CD4-positive, alpha-beta T cell (primary cell): ENCODE measurements at regions of chr15 and their contacts with region 1.

Region 1: GRCh38 chr15:24748812-24749439 is 73.4 kb downstream of the NPAP1 start:
- DNase-seq: no peak
- ATAC-seq: no peak
- H3K4me3 ChIP-seq: no peak overlapping the region
- H3K4me3 Mint-ChIP-seq: no peak overlapping the region
- H3K27ac ChIP-seq: no peak overlapping the region
- H3K27ac Mint-ChIP-seq: no peak overlapping the region
- H3K4me1 ChIP-seq: no peaks in the 10 kb centered on the region
- H3K4me1 Mint-ChIP-seq: no peaks in the 10 kb centered on the region
- H3K27me3 ChIP-seq: no peaks in the 10 kb centered on the region
- H3K27me3 Mint-ChIP-seq: no peaks in the 10 kb centered on the region
- CTCF ChIP-seq: no peak

Region 2: DNA sequence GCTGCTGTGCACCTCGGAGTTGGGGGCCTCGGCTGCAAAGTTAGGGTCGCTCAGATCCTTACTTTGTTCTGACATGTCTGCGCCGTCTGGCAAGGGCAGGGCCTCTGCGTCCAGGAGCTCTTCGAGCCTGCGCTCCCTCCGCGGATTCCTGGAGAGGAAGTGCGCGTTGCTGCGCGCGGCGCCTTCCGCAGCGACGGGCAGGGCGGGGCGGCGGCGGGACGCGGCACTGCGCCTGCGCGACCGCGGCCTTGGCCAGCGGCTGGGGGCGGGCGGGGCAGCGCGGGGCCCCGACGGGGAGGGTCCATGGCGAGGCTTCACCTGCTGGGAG is 1061.8 kb before region 1 on chr15 and contains the start of gene NDN:
- CTCF ChIA-PET with region 1: no interaction called
- POLR2A ChIA-PET with region 1: no interaction called
- intact Hi-C with region 1: no loop called
- DNase-seq: peak in 1 of 14 experiments; percentile 2
- ATAC-seq: no peak
- H3K4me3 ChIP-seq: no peak within 1 kb of the TSS
- H3K4me3 Mint-ChIP-seq: no peak within 1 kb of the TSS
- H3K27ac ChIP-seq: no peak within 1 kb of the TSS
- H3K27ac Mint-ChIP-seq: no peak within 1 kb of the TSS
- H3K4me1 ChIP-seq: no peaks in the 10 kb centered on the region
- H3K4me1 Mint-ChIP-seq: no peaks in the 10 kb centered on the region
- H3K27me3 ChIP-seq: no peaks in the 10 kb centered on the region
- H3K27me3 Mint-ChIP-seq: peaks cover 3% of the 10 kb centered on the region
- CTCF ChIP-seq: no peak
- total RNA-seq, gene NDN: not detected

Region 3: GRCh38 chr15:25244731-25245585 is 496.0 kb after region 1 on chr15:
- CTCF ChIA-PET with region 1: no interaction called
- POLR2A ChIA-PET with region 1: no interaction called
- intact Hi-C with region 1: loop called in 1 of 2 experiments (anchors 5 kb)
- DNase-seq: peak in 1 of 14 experiments; percentile 19
- ATAC-seq: no peak
- H3K4me3 ChIP-seq: no peak overlapping the region
- H3K4me3 Mint-ChIP-seq: no peak overlapping the region
- H3K27ac ChIP-seq: no peak overlapping the region
- H3K27ac Mint-ChIP-seq: no peak overlapping the region
- H3K4me1 ChIP-seq: no peaks in the 10 kb centered on the region
- H3K4me1 Mint-ChIP-seq: no peaks in the 10 kb centered on the region
- H3K27me3 ChIP-seq: no peaks in the 10 kb centered on the region
- H3K27me3 Mint-ChIP-seq: no peaks in the 10 kb centered on the region
- CTCF ChIP-seq: no peak